Calu3 (cell line): ENCODE measurements at regions of chr7 and their contacts with region 1.

Region 1: DNA sequence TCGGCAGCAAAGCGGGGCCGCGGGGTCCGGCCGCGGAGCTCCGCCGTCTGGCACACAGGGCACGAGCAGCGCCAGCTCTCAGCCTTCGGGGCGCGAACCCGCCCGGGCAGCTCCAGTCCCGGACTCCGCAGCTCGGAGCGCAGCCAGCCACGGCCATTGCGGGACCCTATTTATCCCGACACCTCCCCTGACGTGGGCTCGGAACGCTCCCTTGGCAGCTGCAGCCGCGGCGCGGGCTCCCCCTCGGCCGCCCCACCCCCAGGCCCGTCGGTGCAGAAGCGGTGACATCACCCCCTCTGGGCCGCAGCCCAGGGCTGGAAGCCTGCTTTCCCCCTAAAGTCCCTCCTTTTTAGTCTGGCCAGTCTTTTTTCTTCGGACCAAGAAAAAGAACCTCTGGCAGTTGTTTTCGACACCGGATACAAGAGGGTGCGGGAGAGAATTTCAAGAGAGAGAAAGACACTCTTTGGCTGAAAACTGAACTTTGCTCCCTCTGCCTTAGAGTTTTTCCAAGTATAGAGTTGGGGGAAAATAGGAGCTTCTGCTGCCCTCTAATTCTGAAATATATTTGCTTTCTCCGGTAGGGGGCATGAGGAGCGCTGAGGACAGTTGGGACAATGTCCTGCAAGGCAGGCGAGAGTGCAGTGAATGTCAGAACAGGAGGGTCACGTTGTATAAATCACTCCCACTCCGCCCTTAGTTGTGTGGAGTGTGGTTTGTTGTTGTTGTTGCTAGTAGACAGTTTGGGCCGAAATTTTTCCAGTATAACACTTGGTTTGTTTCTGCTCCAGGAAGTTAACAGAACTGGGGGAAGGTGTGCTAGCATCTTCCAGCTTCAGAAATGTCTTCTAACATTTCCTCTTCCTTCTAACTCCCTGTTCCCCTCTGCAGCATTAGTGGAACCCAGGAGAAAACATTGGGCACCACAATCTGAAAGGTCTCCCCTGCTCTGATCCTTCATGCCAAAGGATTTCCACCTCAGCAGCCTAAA is at the start of gene SFRP4:
- DNase-seq: peak; percentile 78
- H3K4me3 Mint-ChIP-seq: peak within 1 kb of the TSS; percentile 78
- H3K27ac Mint-ChIP-seq: peak within 1 kb of the TSS; percentile 31
- H3K4me1 Mint-ChIP-seq: peaks cover 35% of the 10 kb centered on the region
- H3K27me3 Mint-ChIP-seq: peaks cover 29% of the 10 kb centered on the region
- CTCF ChIP-seq: peak; percentile 71
- total RNA-seq, gene SFRP4: not detected in 2 replicates

Region 2: DNA sequence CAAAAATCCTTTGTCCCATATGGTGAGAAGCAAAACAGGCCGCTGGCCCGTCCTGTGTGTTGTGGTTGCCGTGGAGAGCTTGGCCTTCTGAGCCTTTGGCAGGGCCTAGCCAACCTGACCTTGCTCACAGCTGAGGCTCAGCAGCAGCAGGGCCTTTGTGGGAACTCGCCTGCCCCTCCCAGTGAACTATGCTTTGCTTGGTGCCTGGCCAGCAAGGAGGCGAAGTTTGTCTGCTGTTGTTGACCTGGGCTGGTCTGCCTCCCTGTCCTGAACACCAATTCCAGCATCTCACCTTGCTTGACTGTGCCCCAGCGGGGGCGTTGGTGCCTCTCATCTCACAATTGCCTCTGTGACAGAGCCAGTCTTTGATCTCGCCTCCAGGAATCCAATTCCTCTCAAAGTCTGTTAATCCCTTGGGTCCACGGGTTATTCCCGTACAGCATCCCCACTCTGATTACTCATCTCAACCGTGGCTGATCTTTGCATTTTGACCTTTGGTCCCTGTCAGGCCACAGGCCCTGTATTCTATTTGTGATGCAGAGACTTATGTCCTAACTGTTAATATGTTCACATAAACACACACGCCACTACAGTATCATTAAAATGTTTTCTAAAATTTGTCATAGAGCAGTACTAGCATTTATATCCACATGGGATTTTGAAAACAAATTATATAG is 26.1 kb after region 1 on chr7:
- CTCF ChIA-PET with region 1: interaction called, 19 read pairs
- intact Hi-C with region 1: loop called (anchors 2 kb)
- DNase-seq: peak; percentile 67
- H3K4me3 Mint-ChIP-seq: peak overlapping the region; percentile 40
- H3K27ac Mint-ChIP-seq: peak overlapping the region; percentile 79
- H3K4me1 Mint-ChIP-seq: peaks cover 46% of the 10 kb centered on the region
- H3K27me3 Mint-ChIP-seq: no peaks in the 10 kb centered on the region
- CTCF ChIP-seq: no peak

Region 3: DNA sequence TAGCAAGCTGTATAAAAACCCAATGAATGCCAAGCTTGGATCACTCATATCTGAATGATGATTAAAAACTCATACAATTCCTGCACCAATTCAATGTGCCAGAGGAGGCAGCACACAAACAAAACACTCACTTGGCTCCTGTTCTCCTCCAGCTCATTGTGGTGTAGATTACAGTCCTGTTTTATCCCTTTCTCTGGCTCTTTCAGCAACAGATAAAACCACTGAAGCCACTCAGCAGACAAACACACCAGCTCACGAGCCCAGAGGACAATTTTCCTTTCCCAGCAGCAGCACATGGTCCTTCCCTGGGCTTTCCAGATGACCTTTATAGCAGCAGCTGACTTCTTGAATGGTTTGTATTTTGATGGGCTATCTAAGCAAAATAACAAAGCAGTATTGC is 153.8 kb after region 1 on chr7:
- CTCF ChIA-PET with region 1: interaction called, 10 read pairs
- intact Hi-C with region 1: loop called (anchors 5 kb)
- DNase-seq: peak; percentile 29
- H3K4me3 Mint-ChIP-seq: no peak overlapping the region
- H3K27ac Mint-ChIP-seq: no peak overlapping the region
- H3K4me1 Mint-ChIP-seq: no peaks in the 10 kb centered on the region
- H3K27me3 Mint-ChIP-seq: peaks cover 11% of the 10 kb centered on the region
- CTCF ChIP-seq: peak; percentile 13

Region 4: DNA sequence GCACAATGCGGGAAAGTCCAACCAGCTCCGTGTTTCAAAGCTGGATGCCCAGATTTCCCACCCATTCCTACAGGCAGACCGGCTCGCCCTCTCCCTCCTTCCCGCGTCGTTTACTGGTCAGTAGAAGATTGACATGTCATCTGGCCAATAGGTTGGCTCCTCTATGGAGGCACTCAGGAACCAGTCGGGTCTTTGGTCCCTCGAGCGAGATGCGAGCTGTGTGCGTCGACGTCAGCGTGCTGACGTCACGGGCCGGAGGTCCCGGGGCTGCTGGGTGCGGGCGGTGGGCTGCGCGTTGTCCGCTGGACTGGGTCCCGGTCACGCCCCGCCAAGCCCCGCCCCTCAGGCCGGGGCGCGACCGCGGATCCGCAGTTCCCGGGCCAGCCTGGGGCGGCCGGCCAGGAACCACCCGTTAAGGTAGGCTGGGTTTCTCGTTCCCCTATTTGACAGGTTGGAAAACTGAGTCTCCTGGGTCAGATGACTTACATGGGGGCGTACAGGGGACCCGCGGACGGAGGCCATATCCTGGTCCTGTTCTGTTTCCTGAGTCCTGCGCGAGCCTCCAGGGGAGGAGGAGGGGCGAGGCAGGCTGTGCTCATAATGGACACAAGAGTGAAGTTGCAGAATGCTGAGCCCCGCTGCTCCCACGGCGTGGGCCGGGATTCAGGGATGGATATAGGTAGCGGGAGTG is 261.2 kb after region 1 on chr7 and contains the start of gene STARD3NL:
- CTCF ChIA-PET with region 1: interaction called, 12 read pairs
- intact Hi-C with region 1: loop called (anchors 2 kb)
- DNase-seq: peak; percentile 99
- H3K4me3 Mint-ChIP-seq: peak within 1 kb of the TSS; percentile 95
- H3K27ac Mint-ChIP-seq: peak within 1 kb of the TSS; percentile 90
- H3K4me1 Mint-ChIP-seq: peaks cover 17% of the 10 kb centered on the region
- H3K27me3 Mint-ChIP-seq: no peaks in the 10 kb centered on the region
- CTCF ChIP-seq: no peak
- total RNA-seq, gene STARD3NL: 60.7 and 66.4 TPM in 2 replicates

Region 5: GRCh38 chr7:38222481-38223096 is 305.6 kb after region 1 on chr7:
- CTCF ChIA-PET with region 1: interaction called, 5 read pairs
- intact Hi-C with region 1: loop called (anchors 5 kb)
- DNase-seq: peak; percentile 67
- H3K4me3 Mint-ChIP-seq: no peak overlapping the region
- H3K27ac Mint-ChIP-seq: no peak overlapping the region
- H3K4me1 Mint-ChIP-seq: no peaks in the 10 kb centered on the region
- H3K27me3 Mint-ChIP-seq: no peaks in the 10 kb centered on the region
- CTCF ChIP-seq: peak; percentile 89